Activated B cell treated with CpG ODN at 0.5 μM for 24 hours (primary cell): ENCODE measurements at regions of chr15 and their contacts with region 1.

Region 1: GRCh38 chr15:60179786-60180391 is 175.8 kb downstream of the FOXB1 start:
- DNase-seq: no peak
- ATAC-seq: peak; percentile 64
- H3K4me3 Mint-ChIP-seq: no peak overlapping the region
- H3K27ac Mint-ChIP-seq: no peak overlapping the region
- H3K4me1 Mint-ChIP-seq: no peaks in the 10 kb centered on the region
- H3K27me3 Mint-ChIP-seq: peaks cover 24% of the 10 kb centered on the region
- CTCF ChIP-seq: peak; percentile 47

Region 2: GRCh38 chr15:59725172-59725486 is 454.8 kb before region 1 on chr15:
- CTCF ChIA-PET with region 1: interaction called, 14 read pairs
- POLR2A ChIA-PET with region 1: no interaction called
- intact Hi-C with region 1: loop called (anchors 1 kb)
- DNase-seq: no peak
- ATAC-seq: no peak
- H3K4me3 Mint-ChIP-seq: no peak overlapping the region
- H3K27ac Mint-ChIP-seq: no peak overlapping the region
- H3K4me1 Mint-ChIP-seq: no peaks in the 10 kb centered on the region
- H3K27me3 Mint-ChIP-seq: peaks cover 18% of the 10 kb centered on the region
- CTCF ChIP-seq: no peak

Region 3: GRCh38 chr15:59917504-59918157 is 262.3 kb before region 1 on chr15:
- CTCF ChIA-PET with region 1: interaction called, 3 read pairs
- POLR2A ChIA-PET with region 1: no interaction called
- intact Hi-C with region 1: loop called (anchors 1 kb)
- DNase-seq: peak; percentile 17
- ATAC-seq: peak; percentile 62
- H3K4me3 Mint-ChIP-seq: no peak overlapping the region
- H3K27ac Mint-ChIP-seq: no peak overlapping the region
- H3K4me1 Mint-ChIP-seq: no peaks in the 10 kb centered on the region
- H3K27me3 Mint-ChIP-seq: peaks cover 3% of the 10 kb centered on the region
- CTCF ChIP-seq: no peak

Region 4: DNA sequence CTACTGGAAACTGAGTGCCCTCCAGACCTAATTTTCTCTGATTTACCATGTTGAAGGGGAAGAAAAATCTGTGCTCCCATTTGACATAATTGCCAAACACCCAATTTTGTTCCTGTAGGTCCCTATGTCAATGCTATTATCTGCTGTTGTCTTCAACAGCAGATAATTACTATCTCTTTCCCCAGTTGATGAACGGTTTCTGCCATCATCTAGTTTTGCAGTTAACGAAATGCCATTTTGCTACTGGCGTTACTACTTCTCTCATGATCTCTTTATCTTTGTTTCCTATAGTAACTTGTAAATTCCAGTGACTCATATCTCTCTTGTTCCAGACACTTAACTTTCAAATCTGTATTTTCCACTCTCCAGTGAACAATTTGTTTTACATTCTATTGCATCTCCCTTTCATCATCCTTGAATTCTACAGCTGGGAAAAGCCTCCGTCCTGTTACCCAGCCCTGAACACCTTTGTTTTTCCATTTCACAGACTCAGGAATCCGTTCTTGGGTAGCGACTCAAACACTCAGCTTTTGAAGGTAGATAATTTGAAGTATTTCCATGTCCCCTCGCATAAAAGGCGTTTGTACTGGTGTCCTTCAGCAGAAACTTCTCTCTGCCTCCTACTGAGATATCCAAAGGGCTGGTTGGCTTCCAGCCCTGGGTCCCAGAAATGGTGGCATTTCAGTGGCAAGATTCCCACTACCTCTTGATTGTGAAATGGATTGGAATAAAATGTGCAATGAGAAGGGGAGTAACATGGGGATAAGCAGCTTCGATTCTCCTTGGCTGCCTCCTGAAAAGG is 64.1 kb before region 1 on chr15:
- CTCF ChIA-PET with region 1: no interaction called
- POLR2A ChIA-PET with region 1: no interaction called
- intact Hi-C with region 1: no loop called
- DNase-seq: no peak
- ATAC-seq: no peak
- H3K4me3 Mint-ChIP-seq: no peak overlapping the region
- H3K27ac Mint-ChIP-seq: no peak overlapping the region
- H3K4me1 Mint-ChIP-seq: no peaks in the 10 kb centered on the region
- H3K27me3 Mint-ChIP-seq: peaks cover 13% of the 10 kb centered on the region
- CTCF ChIP-seq: no peak

Region 5: DNA sequence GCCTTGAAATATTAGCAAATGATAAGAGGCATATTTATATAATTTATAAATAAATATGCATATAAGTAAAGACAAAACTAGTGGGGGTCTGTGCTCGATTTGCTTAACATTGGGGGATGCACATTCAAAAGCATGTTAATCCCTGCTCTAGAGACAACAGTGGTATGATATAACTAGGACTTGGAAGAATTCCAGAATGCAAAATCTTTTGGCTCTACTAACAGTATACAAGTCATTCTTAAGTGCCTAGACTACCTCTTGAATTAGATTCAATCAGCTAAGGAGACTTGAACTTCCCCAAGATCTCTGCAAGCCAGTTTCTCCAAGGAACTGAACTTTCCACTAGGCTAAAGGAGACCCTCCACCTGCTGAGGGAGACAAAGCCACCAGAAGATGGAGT is 1331.9 kb after region 1 on chr15:
- CTCF ChIA-PET with region 1: no interaction called
- POLR2A ChIA-PET with region 1: no interaction called
- intact Hi-C with region 1: no loop called
- DNase-seq: no peak
- ATAC-seq: no peak
- H3K4me3 Mint-ChIP-seq: no peak overlapping the region
- H3K27ac Mint-ChIP-seq: no peak overlapping the region
- H3K4me1 Mint-ChIP-seq: no peaks in the 10 kb centered on the region
- H3K27me3 Mint-ChIP-seq: peaks cover 2% of the 10 kb centered on the region
- CTCF ChIP-seq: no peak